ENCODE measurements at regions of chr21 and their contacts with region 1.

Region 1: DNA sequence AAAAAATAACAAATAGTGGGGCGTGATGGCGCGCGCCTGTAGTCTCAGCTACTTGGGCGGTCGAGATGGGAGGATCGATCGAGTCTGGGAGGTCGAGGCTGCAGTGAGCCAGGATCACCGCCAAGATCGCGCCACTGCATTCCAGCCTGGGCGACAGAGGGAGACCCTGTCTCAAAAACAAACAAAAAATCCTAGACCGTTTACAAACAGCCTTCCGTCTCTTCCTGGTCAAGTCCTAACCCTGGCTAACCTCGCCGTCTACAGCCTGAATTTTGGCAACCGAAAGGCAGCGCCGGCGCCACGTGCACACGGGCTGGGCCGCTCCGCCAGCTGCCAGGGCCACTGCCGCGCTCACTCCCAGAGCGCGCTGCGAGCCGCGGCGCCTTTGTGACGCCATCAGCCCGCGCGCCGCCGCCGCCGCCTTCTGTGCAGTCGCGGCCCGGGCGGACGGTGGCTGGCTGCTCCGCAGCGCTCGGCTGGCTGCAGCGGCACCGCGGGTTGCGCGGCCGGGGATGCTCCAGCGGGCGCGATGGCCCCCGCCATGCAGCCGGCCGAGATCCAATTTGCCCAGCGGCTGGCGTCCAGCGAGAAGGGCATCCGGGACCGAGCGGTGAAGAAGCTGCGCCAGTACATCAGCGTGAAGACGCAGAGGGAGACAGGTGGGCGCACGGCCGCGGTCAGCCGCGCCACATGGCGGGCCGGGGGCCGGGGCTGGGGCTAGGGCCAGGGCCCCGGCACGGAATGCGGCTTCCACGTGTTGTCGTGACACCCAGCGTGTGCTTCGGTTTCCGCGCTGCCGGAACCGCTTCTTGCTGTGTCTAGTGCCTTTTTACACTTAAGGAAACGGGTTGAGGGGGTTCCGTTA is at the starts of genes HSF2BP and RRP1B:
- DNase-seq: peak; percentile 81 to 90
- ATAC-seq: peak; percentile 90 to 91 (median 90)
- H3K4me3 ChIP-seq: peak within 1 kb of the TSS; percentile 77
- H3K4me3 Mint-ChIP-seq: peak within 1 kb of the TSS; percentile 94
- H3K27ac ChIP-seq: peak within 1 kb of the TSS; percentile 79
- H3K27ac Mint-ChIP-seq: peak within 1 kb of the TSS; percentile 85 to 94
- H3K4me1 ChIP-seq: peaks cover 22% of the 10 kb centered on the region
- H3K4me1 Mint-ChIP-seq: peaks cover 29 to 30% of the 10 kb centered on the region in 2 donors
- H3K27me3 ChIP-seq: no peaks in the 10 kb centered on the region
- H3K27me3 Mint-ChIP-seq: peaks cover 0 to 4% of the 10 kb centered on the region in 2 donors
- CTCF ChIP-seq: no peak
- total RNA-seq, gene HSF2BP: 0.33 to 0.39 TPM in 2 of 3 donors, not detected in the other
- total RNA-seq, gene RRP1B: 18.1 to 28.4 (median 25.0) TPM

Region 2: GRCh38 chr21:43340491-43341377 is 318.6 kb before region 1 on chr21:
- intact Hi-C with region 1: no loop called
- DNase-seq: no peak
- ATAC-seq: no peak
- H3K4me3 ChIP-seq: no peak overlapping the region
- H3K4me3 Mint-ChIP-seq: no peak overlapping the region
- H3K27ac ChIP-seq: no peak overlapping the region
- H3K27ac Mint-ChIP-seq: no peak overlapping the region
- H3K4me1 ChIP-seq: peaks cover 20% of the 10 kb centered on the region
- H3K4me1 Mint-ChIP-seq: peaks cover 6 to 22% of the 10 kb centered on the region in 2 donors
- H3K27me3 ChIP-seq: no peaks in the 10 kb centered on the region
- H3K27me3 Mint-ChIP-seq: peaks cover 0 to 5% of the 10 kb centered on the region in 2 donors
- CTCF ChIP-seq: no peak

Region 3: DNA sequence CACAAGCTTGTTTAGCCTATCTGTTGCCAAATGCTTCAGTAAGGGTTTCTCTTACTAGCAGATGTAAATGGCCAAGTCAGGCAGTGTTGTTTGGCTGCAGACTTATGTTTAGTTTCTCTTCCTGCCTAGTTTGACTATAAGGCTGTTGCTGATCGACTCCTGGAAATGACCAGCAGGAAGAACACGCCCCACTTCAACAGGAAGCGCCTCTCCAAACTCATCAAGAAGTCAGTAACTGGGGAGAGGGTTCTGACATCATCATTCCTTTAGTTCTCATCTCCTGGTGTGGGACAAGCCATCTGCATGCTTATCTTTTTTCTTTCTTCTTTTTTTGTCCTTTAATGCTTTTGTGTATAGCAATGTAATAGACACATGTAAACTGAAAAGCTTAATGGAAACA is 25.1 kb after region 1 on chr21:
- intact Hi-C with region 1: no loop called
- DNase-seq: no peak
- ATAC-seq: no peak
- H3K4me3 ChIP-seq: no peak overlapping the region
- H3K4me3 Mint-ChIP-seq: no peak overlapping the region
- H3K27ac ChIP-seq: no peak overlapping the region
- H3K27ac Mint-ChIP-seq: no peak overlapping the region
- H3K4me1 ChIP-seq: no peaks in the 10 kb centered on the region
- H3K4me1 Mint-ChIP-seq: peaks cover 6 to 10% of the 10 kb centered on the region in 2 donors
- H3K27me3 ChIP-seq: no peaks in the 10 kb centered on the region
- H3K27me3 Mint-ChIP-seq: no peaks in the 10 kb centered on the region
- CTCF ChIP-seq: no peak

Region 4: DNA sequence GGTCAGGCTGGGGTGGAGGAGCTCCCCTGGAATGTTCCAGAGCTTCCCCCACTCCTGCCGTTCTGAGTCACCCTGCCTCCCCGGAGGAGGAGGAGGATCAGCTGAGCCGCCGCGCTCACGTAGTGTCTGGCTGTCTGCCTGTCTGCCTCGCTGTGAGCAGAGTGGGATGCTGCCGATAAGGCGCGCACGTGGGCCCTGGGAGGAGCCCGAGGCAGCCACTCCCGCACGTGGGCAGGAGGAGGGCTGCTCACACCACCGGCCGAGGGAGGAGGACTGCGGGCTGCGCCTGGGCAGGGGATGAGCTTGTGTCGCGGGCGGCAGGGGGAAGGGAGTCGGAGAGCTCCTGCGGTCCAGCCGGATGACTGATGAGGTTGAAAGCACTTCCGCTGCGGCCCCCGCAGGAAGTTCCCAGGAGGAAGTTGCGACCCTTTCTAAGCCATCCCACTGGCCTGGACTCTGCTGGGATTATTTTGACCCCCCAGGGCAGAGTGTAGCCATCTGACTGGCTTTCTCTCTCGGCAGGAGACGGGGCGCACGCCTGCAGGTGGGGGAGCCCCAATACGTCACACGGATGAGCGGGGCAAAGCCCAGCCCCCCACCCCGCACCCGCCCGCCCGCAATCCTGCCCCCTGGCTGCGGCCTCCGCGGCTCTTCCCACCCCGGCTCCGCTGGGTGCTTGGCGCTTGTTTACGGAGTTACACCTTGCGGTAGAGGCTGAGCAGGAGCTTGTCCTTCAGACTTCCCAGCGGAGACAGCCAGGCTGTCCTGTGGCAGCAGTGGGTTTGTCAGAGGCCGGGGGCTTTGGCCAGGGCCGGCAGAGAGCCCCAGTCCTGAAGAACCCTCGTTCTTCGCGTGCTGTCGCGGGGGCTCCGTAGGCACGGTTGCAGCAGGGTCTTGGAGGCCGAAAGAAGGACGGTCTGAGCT is 69.4 kb after region 1 on chr21:
- intact Hi-C with region 1: loop called (anchors 5 kb)
- DNase-seq: peak; percentile 78 to 91
- ATAC-seq: peak; percentile 86 to 95 (median 89)
- H3K4me3 ChIP-seq: peak overlapping the region; percentile 51
- H3K4me3 Mint-ChIP-seq: peak overlapping the region; percentile 87
- H3K27ac ChIP-seq: peak overlapping the region; percentile 82
- H3K27ac Mint-ChIP-seq: peak overlapping the region; percentile 88 to 93
- H3K4me1 ChIP-seq: peaks cover 68% of the 10 kb centered on the region
- H3K4me1 Mint-ChIP-seq: peaks cover 37 to 46% of the 10 kb centered on the region in 2 donors
- H3K27me3 ChIP-seq: no peaks in the 10 kb centered on the region
- H3K27me3 Mint-ChIP-seq: no peaks in the 10 kb centered on the region
- CTCF ChIP-seq: no peak

Region 5: DNA sequence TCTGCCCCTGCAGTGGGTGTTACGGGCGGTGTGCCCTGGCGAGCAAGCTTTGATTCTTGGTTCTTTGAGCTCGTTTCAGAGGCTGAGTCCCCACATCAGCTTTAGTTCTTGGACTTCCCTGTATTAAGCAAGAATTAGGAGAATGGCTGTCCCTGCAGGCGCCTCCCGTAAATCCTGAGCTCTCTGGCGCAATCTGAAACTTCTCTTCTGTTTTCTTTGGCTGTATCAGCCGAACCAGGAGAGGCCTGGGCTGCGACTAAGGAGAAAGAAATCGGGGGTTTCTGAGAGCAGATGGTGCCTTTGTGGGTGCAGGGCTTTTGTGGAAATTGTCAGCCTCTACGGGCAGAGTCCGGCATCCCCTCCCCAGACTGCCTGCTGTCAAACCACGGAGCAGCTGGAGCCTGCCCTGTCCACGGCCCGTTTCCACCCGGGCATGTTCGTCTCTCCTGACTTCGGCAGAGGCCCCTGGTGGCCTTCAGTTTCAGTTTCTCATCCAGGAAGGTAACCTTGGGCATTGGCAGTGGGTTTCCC is 98.8 kb after region 1 on chr21:
- intact Hi-C with region 1: no loop called
- DNase-seq: no peak
- ATAC-seq: no peak
- H3K4me3 ChIP-seq: no peak overlapping the region
- H3K4me3 Mint-ChIP-seq: no peak overlapping the region
- H3K27ac ChIP-seq: no peak overlapping the region
- H3K27ac Mint-ChIP-seq: no peak overlapping the region
- H3K4me1 ChIP-seq: no peaks in the 10 kb centered on the region
- H3K4me1 Mint-ChIP-seq: no peaks in the 10 kb centered on the region
- H3K27me3 ChIP-seq: no peaks in the 10 kb centered on the region
- H3K27me3 Mint-ChIP-seq: no peaks in the 10 kb centered on the region
- CTCF ChIP-seq: no peak